IMR-90 (cell line): ENCODE measurements at regions of chr6 and their contacts with region 1.

Region 1: GRCh38 chr6:121067381-121067780 is 266.9 kb downstream of the TBC1D32 start:
- DNase-seq: no peak
- ATAC-seq: no peak
- H3K4me3 ChIP-seq: no peak overlapping the region
- H3K27ac ChIP-seq: no peak overlapping the region
- H3K4me1 ChIP-seq: no peaks in the 10 kb centered on the region
- H3K27me3 ChIP-seq: no peaks in the 10 kb centered on the region
- CTCF ChIP-seq: no peak
- POLR2A ChIP-seq: no peak
- RAD21 ChIP-seq: no peak

Region 2: DNA sequence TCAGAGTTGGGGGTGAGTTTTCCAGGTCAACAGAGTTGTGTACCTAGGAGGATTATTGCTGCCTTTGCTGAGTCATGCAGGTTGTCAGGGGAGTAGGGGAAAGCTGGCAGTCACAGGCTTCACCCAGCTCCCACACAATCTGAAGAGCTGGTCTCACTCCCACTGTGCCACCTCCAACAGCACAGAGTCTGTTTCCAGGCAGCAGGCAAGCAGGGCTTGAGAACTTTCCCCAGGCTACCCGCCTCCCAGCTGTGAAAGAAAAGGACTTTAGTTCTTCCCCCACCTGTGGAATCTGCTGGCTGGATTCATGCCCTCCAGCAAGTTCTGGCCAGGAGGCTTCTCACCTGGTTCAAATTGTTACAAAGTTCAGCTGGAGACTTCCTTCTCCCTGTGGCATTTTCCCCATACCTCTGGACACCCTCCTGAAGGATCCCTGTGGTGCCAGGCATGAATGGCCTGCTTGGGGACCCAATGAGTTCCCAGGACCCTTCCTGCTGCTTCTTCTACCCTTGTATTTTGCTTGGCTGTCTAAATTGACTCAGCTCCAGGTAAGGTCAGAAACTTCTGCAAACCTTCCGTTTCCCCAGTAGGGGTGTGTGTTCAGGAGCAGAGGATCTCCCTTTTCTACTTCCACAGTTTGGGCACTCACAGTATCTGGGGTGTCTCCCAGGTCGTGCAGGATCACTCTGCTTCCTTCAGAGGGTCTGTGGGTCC is 1339.7 kb before region 1 on chr6:
- CTCF ChIA-PET with region 1: no interaction called
- POLR2A ChIA-PET with region 1: no interaction called
- dilution Hi-C with region 1: no loop called
- in situ Hi-C with region 1: no loop called
- intact Hi-C with region 1: no loop called
- DNase-seq: no peak
- ATAC-seq: no peak
- H3K4me3 ChIP-seq: no peak overlapping the region
- H3K27ac ChIP-seq: no peak overlapping the region
- H3K4me1 ChIP-seq: no peaks in the 10 kb centered on the region
- H3K27me3 ChIP-seq: no peaks in the 10 kb centered on the region
- CTCF ChIP-seq: no peak
- POLR2A ChIP-seq: no peak
- RAD21 ChIP-seq: no peak

Region 3: GRCh38 chr6:121216928-121217327 is 149.5 kb after region 1 on chr6:
- CTCF ChIA-PET with region 1: no interaction called
- POLR2A ChIA-PET with region 1: no interaction called
- dilution Hi-C with region 1: no loop called
- in situ Hi-C with region 1: loop called (anchors 10 kb)
- intact Hi-C with region 1: no loop called
- DNase-seq: peak; percentile 58
- ATAC-seq: peak; percentile 62
- H3K4me3 ChIP-seq: no peak overlapping the region
- H3K27ac ChIP-seq: no peak overlapping the region
- H3K4me1 ChIP-seq: no peaks in the 10 kb centered on the region
- H3K27me3 ChIP-seq: no peaks in the 10 kb centered on the region
- CTCF ChIP-seq: no peak
- POLR2A ChIP-seq: no peak
- RAD21 ChIP-seq: no peak

Region 4: GRCh38 chr6:121393731-121394505 is 326.5 kb after region 1 on chr6:
- CTCF ChIA-PET with region 1: no interaction called
- POLR2A ChIA-PET with region 1: no interaction called
- dilution Hi-C with region 1: no loop called
- in situ Hi-C with region 1: loop called (anchors 10 kb)
- intact Hi-C with region 1: no loop called
- DNase-seq: no peak
- ATAC-seq: no peak
- H3K4me3 ChIP-seq: no peak overlapping the region
- H3K27ac ChIP-seq: no peak overlapping the region
- H3K4me1 ChIP-seq: no peaks in the 10 kb centered on the region
- H3K27me3 ChIP-seq: no peaks in the 10 kb centered on the region; the same call in 1 of the 2 replicates
- CTCF ChIP-seq: no peak
- POLR2A ChIP-seq: no peak
- RAD21 ChIP-seq: no peak

Region 5: GRCh38 chr6:121521892-121522664 is 454.7 kb after region 1 on chr6:
- CTCF ChIA-PET with region 1: no interaction called
- POLR2A ChIA-PET with region 1: no interaction called
- dilution Hi-C with region 1: no loop called
- in situ Hi-C with region 1: no loop called
- intact Hi-C with region 1: no loop called
- DNase-seq: peak; percentile 96
- ATAC-seq: peak; percentile 74
- H3K4me3 ChIP-seq: peak overlapping the region; percentile 29; the same call in 1 of the 2 replicates
- H3K27ac ChIP-seq: peak overlapping the region; percentile 100
- H3K4me1 ChIP-seq: peaks cover 18% of the 10 kb centered on the region
- H3K27me3 ChIP-seq: no peaks in the 10 kb centered on the region
- CTCF ChIP-seq: no peak
- POLR2A ChIP-seq: no peak
- RAD21 ChIP-seq: peak; percentile 22